Ascending aorta (tissue), 2 donors: ENCODE measurements at regions of chr19 and their contacts with region 1.

Region 1: GRCh38 chr19:43784981-43785808 is 4.4 kb upstream of the KCNN4 start:
- DNase-seq: peak in 1 of 2 donors; percentile 76
- H3K4me3 ChIP-seq: peak overlapping the region in 1 of 2 donors; percentile 31
- H3K27ac ChIP-seq: no peak overlapping the region
- H3K4me1 ChIP-seq: peaks cover 0 to 7% of the 10 kb centered on the region in 2 donors
- H3K27me3 ChIP-seq: no peaks in the 10 kb centered on the region
- CTCF ChIP-seq: peak; percentile 92 to 97 (median 94)

Region 2: DNA sequence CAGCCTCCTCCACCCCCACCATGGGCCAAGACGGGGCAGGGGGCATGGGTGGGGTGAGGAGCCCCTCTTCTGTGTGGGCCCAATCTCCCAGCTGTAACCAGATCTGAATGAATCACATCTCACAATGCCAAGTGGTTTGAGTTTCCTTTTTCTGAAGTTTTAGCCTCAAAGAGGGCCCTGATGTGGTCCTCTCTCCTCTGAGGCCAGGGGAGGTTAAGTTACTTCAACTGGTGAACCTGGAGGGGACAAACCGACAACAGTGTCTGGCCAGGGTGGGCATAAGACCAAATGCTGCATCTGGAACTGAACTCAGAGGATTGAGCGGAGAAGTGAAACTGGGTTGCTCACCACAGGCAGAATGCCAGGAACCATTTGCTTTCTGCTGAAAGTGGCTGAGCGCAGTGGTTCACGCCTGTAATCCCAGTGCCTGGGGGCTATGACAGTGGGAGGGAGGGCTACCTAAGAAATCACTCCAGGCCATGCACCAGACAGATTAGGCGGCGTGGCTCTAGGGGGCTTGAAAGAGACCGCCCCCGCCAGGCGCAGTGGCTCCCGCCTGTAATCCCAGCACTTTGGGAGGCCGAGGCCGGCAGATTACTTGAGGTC is 84.7 kb before region 1 on chr19:
- intact Hi-C with region 1: no loop called
- DNase-seq: no peak
- H3K4me3 ChIP-seq: peak overlapping the region in 1 of 2 donors; percentile 33
- H3K27ac ChIP-seq: peak overlapping the region; percentile 25 to 38
- H3K4me1 ChIP-seq: no peaks in the 10 kb centered on the region
- H3K27me3 ChIP-seq: no peaks in the 10 kb centered on the region
- CTCF ChIP-seq: no peak

Region 3: GRCh38 chr19:43743022-43743421 is 42.2 kb before region 1 on chr19:
- intact Hi-C with region 1: loop called (anchors 1 kb)
- DNase-seq: no peak
- H3K4me3 ChIP-seq: no peak overlapping the region
- H3K27ac ChIP-seq: no peak overlapping the region
- H3K4me1 ChIP-seq: no peaks in the 10 kb centered on the region
- H3K27me3 ChIP-seq: no peaks in the 10 kb centered on the region
- CTCF ChIP-seq: no peak